ENCODE measurements at regions of chr3 and their contacts with region 1.

Region 1: DNA sequence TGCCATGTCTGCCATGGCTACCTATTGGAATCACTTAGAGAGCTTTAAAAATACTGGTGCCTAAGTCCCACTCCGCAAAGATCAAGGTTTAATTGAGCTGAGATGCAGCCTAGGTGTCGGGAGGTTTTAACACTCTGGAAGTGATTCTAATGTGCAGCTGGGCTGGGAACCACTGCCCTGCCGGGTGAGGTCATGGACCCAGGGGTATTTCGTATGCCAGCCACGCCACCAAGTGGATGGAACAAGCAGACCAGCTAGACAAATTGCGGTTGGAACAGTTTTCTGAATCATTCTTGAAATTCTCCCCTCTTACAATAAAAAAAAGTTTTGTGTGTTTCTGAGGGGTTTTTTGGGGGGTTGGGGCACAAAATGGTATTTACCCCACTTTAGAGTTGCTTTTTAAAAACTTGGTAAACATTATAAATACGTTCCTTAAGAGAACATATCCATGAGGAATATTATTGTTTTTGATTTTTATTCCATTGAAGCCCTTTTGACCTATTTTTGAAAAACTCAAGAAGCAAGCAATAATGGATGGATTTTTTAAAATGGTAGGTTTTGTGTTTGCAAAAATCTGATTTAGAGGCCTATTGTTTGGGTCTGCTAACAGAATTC is 66.2 kb upstream of the CSTA start:
- DNase-seq: peak; percentile 77
- ATAC-seq: peak; percentile 92
- H3K4me3 ChIP-seq: no peak overlapping the region
- H3K4me3 Mint-ChIP-seq: no peak overlapping the region
- H3K27ac ChIP-seq: no peak overlapping the region
- H3K27ac Mint-ChIP-seq: no peak overlapping the region
- H3K4me1 ChIP-seq: peaks cover 0 to 3% of the 10 kb centered on the region in 2 donors
- H3K4me1 Mint-ChIP-seq: peaks cover 10% of the 10 kb centered on the region
- H3K27me3 ChIP-seq: no peaks in the 10 kb centered on the region
- H3K27me3 Mint-ChIP-seq: no peaks in the 10 kb centered on the region
- CTCF ChIP-seq: peak; percentile 76

Region 2: DNA sequence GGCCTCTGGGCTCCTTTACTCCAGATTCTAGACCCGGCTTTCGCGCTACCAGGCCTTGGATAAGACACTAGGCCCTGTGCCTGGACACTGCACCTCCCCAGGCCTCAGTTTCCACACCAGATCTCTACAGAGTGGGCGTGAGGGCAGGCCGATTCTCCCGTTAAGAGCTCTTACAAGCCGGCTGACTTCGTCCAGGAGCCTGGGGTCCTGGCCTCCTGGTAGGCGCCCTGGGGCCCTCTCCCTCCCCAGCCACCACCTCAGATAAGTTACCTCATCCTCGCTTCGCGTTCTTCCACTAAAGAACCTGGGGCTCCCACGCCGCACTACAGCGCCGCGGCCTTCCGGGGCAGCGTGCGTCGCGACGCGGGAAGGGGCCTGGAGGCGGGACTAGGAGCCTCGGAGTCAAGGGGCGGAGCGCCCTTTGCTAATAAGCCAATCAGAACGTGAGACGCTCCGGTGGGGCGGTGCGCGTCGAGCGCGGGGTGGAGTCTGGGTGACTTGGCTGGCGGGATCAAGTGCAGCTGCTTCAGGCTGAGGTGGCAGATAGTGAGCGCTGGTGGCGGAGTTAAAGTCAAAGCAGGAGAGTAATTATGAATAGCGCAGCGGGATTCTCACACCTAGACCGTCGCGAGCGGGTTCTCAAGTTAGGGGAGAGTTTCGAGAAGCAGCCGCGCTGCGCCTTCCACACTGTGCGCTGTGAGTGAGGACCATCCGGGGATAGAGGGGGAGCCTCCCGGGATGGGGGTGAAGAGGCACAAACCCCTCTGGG is 424.0 kb before region 1 on chr3 and contains the starts of genes EAF2 and IQCB1:
- CTCF ChIA-PET with region 1: no interaction called
- POLR2A ChIA-PET with region 1: interaction called, 4 read pairs
- intact Hi-C with region 1: loop called (anchors 2 kb)
- DNase-seq: peak; percentile 99
- ATAC-seq: peak; percentile 97
- H3K4me3 ChIP-seq: peak within 1 kb of the TSS; percentile 83 to 97 (median 94)
- H3K4me3 Mint-ChIP-seq: peak within 1 kb of the TSS; percentile 89
- H3K27ac ChIP-seq: peak within 1 kb of the TSS; percentile 88 to 94
- H3K27ac Mint-ChIP-seq: peak within 1 kb of the TSS; percentile 88
- H3K4me1 ChIP-seq: peaks cover 22 to 46% of the 10 kb centered on the region in 2 donors
- H3K4me1 Mint-ChIP-seq: peaks cover 64% of the 10 kb centered on the region
- H3K27me3 ChIP-seq: no peaks in the 10 kb centered on the region
- H3K27me3 Mint-ChIP-seq: no peaks in the 10 kb centered on the region
- CTCF ChIP-seq: no peak
- total RNA-seq, gene EAF2: 31.1 and 35.0 TPM in 2 replicates
- total RNA-seq, gene IQCB1: 54.6 and 56.5 TPM in 2 replicates

Region 3: GRCh38 chr3:121975702-121976302 is 283.1 kb before region 1 on chr3:
- CTCF ChIA-PET with region 1: interaction called, 18 read pairs
- POLR2A ChIA-PET with region 1: no interaction called
- intact Hi-C with region 1: loop called (anchors 1 kb)
- DNase-seq: peak; percentile 33
- ATAC-seq: no peak
- H3K4me3 ChIP-seq: no peak overlapping the region
- H3K4me3 Mint-ChIP-seq: no peak overlapping the region
- H3K27ac ChIP-seq: no peak overlapping the region
- H3K27ac Mint-ChIP-seq: no peak overlapping the region
- H3K4me1 ChIP-seq: peaks cover 4 to 12% of the 10 kb centered on the region in 2 donors
- H3K4me1 Mint-ChIP-seq: peaks cover 20% of the 10 kb centered on the region
- H3K27me3 ChIP-seq: no peaks in the 10 kb centered on the region
- H3K27me3 Mint-ChIP-seq: no peaks in the 10 kb centered on the region
- CTCF ChIP-seq: peak; percentile 12

Region 4: DNA sequence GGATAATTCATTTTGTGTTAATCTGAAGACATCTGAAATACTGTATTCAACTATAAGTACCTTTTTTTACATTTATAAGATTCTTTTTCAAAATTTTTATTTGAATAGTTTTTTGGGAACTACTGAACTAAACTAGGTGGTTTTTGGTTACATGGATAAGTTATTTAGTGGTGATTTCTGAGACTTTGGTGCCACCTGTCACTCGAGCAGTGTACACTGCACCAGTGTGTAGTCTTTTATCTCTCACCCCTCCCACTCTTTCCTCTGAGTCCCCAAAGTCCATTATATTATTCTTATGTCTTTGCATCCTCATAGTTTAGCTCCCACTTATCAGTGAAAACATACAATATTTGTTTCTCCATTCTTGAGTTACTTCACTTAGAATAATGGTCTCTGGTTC is 146.1 kb before region 1 on chr3:
- CTCF ChIA-PET with region 1: interaction called, 18 read pairs
- POLR2A ChIA-PET with region 1: no interaction called
- intact Hi-C with region 1: no loop called
- DNase-seq: peak; percentile 17
- ATAC-seq: no peak
- H3K4me3 ChIP-seq: no peak overlapping the region
- H3K4me3 Mint-ChIP-seq: no peak overlapping the region
- H3K27ac ChIP-seq: no peak overlapping the region
- H3K27ac Mint-ChIP-seq: no peak overlapping the region
- H3K4me1 ChIP-seq: peaks cover 4% of the 10 kb centered on the region in 2 donors
- H3K4me1 Mint-ChIP-seq: peaks cover 8% of the 10 kb centered on the region
- H3K27me3 ChIP-seq: no peaks in the 10 kb centered on the region
- H3K27me3 Mint-ChIP-seq: no peaks in the 10 kb centered on the region
- CTCF ChIP-seq: no peak

Region 5: DNA sequence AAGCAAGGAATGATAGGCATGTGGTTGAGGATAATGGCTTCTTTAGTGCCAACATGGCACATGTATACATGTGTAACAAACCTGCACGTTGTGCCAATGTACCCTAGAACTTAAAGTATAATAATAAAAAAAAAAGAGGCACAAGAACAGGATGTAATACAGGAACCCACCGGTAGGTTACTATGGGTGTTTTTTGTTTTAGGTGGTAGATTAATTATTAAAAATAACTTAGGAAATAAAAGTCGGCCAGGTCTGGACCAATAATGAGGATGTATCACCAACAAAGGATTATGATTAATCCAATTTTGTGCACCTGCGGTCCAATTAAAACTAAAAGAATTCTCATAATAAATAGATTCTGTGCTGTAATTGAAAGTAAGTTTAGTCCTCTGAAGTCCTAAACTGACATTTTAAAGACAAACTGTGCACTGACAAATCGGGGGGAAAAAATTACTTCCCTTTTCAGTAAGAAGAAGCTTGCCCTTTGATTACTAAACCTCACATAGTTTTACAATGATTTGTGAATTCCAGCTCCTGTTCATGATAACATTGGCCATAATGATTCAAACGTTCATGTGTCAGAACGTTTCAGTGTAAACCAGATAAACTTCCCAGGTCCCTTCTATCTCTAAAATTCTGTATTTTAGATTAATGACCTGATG is 13.2 kb before region 1 on chr3:
- CTCF ChIA-PET with region 1: interaction called, 25 read pairs
- POLR2A ChIA-PET with region 1: no interaction called
- intact Hi-C with region 1: loop called (anchors 2 kb)
- DNase-seq: peak; percentile 49
- ATAC-seq: no peak
- H3K4me3 ChIP-seq: peak overlapping the region in 4 of 5 experiments; percentile 10 to 71 (median 48)
- H3K4me3 Mint-ChIP-seq: peak overlapping the region; percentile 84
- H3K27ac ChIP-seq: no peak overlapping the region
- H3K27ac Mint-ChIP-seq: peak overlapping the region; percentile 12
- H3K4me1 ChIP-seq: peaks cover 24 to 27% of the 10 kb centered on the region in 2 donors
- H3K4me1 Mint-ChIP-seq: peaks cover 29% of the 10 kb centered on the region
- H3K27me3 ChIP-seq: no peaks in the 10 kb centered on the region
- H3K27me3 Mint-ChIP-seq: no peaks in the 10 kb centered on the region
- CTCF ChIP-seq: peak; percentile 73

Region 6: GRCh38 chr3:122533931-122534334 is 275.1 kb after region 1 on chr3:
- CTCF ChIA-PET with region 1: no interaction called
- POLR2A ChIA-PET with region 1: no interaction called
- intact Hi-C with region 1: no loop called
- DNase-seq: no peak
- ATAC-seq: no peak
- H3K4me3 ChIP-seq: no peak overlapping the region
- H3K4me3 Mint-ChIP-seq: no peak overlapping the region
- H3K27ac ChIP-seq: no peak overlapping the region
- H3K27ac Mint-ChIP-seq: no peak overlapping the region
- H3K4me1 ChIP-seq: no peaks in the 10 kb centered on the region
- H3K4me1 Mint-ChIP-seq: no peaks in the 10 kb centered on the region
- H3K27me3 ChIP-seq: no peaks in the 10 kb centered on the region
- H3K27me3 Mint-ChIP-seq: no peaks in the 10 kb centered on the region
- CTCF ChIP-seq: no peak

Measured in B cell (primary cell).